ENCODE measurements at regions of chr2 and their contacts with region 1.

Region 1: DNA sequence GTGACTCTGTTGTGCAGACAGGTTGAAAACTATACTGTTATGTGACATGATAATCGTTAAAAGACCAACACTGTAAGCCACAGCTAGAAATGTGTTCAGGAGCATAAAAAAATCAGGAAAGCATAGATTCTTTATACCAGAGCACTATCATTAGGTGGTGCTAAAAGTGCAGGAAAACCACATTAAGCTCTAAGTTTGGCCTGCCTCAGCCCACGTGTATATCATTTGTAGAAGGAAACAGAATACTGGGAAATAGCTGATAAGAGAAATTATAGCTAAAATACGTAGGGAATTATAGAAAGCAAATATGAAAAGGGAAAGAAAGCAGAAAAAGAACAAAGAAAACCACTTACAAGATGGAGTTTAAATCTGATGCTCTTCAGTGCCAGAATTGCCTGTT is 26.5 kb upstream of the C2orf74 start:
- DNase-seq: peak; percentile 17
- H3K4me3 Mint-ChIP-seq: no peak overlapping the region
- H3K27ac Mint-ChIP-seq: no peak overlapping the region
- H3K4me1 Mint-ChIP-seq: peaks cover 2% of the 10 kb centered on the region
- H3K27me3 Mint-ChIP-seq: no peaks in the 10 kb centered on the region

Region 2: GRCh38 chr2:61065715-61066709 is 69.5 kb before region 1 on chr2 and contains the start of gene SANBR:
- CTCF ChIA-PET with region 1: no interaction called
- intact Hi-C with region 1: no loop called
- DNase-seq: peak; percentile 83
- H3K4me3 Mint-ChIP-seq: peak within 1 kb of the TSS; percentile 84
- H3K27ac Mint-ChIP-seq: no peak within 1 kb of the TSS
- H3K4me1 Mint-ChIP-seq: peaks cover 8% of the 10 kb centered on the region
- H3K27me3 Mint-ChIP-seq: no peaks in the 10 kb centered on the region
- total RNA-seq, gene SANBR: 1.9 to 2.1 TPM

Region 3: DNA sequence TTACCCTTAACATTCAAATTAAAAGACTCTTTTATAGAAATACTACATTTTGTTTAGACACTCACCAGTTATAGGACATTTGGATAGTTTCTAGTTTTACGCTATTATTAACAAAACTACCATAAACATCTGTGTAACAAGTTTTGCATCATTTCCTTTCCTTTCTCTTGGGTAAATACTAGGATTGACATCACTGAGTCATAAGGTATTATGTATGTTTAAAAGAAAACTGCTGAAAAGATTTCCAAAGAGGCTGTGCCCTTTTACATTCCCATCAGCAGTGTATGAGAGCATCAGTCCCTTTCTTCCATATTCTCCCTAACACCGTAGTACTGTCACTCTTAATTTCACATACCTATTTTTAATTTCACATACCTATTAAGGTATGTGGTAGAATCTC is 204.7 kb after region 1 on chr2:
- CTCF ChIA-PET with region 1: no interaction called
- intact Hi-C with region 1: no loop called
- DNase-seq: no peak
- H3K4me3 Mint-ChIP-seq: no peak overlapping the region
- H3K27ac Mint-ChIP-seq: peak overlapping the region; percentile 24
- H3K4me1 Mint-ChIP-seq: peaks cover 12% of the 10 kb centered on the region
- H3K27me3 Mint-ChIP-seq: no peaks in the 10 kb centered on the region

Region 4: DNA sequence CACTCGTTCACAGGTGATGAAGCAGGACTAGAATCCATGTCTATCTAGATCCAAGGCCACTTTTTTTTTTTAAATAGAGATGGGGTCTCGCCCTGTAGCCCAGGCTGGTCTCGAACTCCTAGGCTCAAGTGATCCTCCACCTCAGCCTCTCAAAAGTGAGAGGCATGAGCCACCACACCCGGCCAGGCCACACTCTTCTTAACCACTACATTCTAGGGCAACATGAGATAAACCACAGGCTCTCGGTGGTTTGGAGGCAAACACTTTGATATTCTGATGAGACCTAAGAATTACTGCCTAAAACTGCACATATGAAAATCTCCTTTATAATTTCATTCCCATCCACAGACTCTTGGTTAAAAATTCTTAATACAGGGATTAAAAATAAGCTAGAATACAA is 283.6 kb after region 1 on chr2:
- CTCF ChIA-PET with region 1: no interaction called
- intact Hi-C with region 1: loop called (anchors 1 kb)
- DNase-seq: no peak
- H3K4me3 Mint-ChIP-seq: no peak overlapping the region
- H3K27ac Mint-ChIP-seq: no peak overlapping the region
- H3K4me1 Mint-ChIP-seq: peaks cover 43% of the 10 kb centered on the region
- H3K27me3 Mint-ChIP-seq: no peaks in the 10 kb centered on the region

Region 5: DNA sequence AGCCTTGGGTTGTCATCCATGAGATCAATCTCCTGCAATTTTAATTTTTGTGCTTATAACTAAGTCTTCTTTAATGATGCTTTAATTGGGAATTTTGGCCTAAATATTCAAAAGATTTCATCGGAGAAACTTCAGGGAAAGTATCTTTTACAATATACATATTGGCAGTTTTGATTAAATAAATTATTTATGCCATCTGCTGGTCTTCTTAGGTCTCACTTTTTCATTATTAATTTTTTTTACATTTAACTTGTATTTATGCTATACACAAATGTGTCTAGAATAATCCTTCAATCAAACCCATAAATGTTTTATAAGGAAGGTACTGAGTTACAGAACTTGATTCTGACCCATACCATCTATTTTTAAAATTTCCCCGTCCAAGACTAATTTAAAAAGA is 497.7 kb after region 1 on chr2:
- CTCF ChIA-PET with region 1: no interaction called
- intact Hi-C with region 1: loop called (anchors 2 kb)
- DNase-seq: no peak
- H3K4me3 Mint-ChIP-seq: no peak overlapping the region
- H3K27ac Mint-ChIP-seq: no peak overlapping the region
- H3K4me1 Mint-ChIP-seq: no peaks in the 10 kb centered on the region
- H3K27me3 Mint-ChIP-seq: no peaks in the 10 kb centered on the region

Region 6: GRCh38 chr2:61658841-61659780 is 523.6 kb after region 1 on chr2:
- CTCF ChIA-PET with region 1: no interaction called
- intact Hi-C with region 1: loop called (anchors 1 kb)
- DNase-seq: no peak
- H3K4me3 Mint-ChIP-seq: no peak overlapping the region
- H3K27ac Mint-ChIP-seq: no peak overlapping the region
- H3K4me1 Mint-ChIP-seq: no peaks in the 10 kb centered on the region
- H3K27me3 Mint-ChIP-seq: no peaks in the 10 kb centered on the region

Region 7: DNA sequence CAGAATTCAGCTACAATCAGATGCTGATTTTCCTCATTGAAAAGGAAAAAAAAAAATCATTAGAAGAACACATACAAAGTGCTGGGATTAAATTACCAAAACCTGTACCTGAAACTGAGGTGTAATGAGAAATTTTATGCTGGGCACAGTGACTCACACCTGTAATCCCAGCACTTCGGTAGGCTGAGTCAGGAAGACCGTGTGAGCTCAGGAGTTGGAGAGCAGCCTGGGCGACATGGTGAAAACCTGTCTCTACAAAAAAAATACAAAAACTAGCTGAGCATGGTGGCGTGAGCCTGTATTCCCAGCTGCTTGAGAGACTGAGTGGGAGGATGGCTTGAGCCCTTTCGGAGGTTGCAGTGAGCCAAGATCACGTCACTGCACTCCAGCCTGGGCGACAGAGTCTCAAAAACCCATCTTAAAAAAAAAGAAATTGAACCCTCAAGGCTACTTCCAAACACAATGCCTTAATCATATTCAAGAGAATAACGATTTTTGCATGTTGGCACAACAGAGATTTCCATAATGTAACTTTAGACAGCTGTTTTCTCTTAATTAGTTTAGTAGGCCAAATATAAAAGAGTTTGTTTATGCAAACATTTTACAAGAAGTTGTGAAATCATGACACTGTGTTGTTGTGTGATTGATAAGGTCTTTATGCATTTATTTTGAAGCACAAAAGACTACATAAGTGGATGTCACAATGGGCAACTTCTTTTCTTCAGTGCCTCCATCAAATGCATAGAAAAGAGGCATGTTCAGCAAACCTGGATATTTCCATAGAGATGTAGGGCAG is 654.5 kb after region 1 on chr2:
- CTCF ChIA-PET with region 1: no interaction called
- intact Hi-C with region 1: loop called (anchors 1 kb)
- DNase-seq: no peak
- H3K4me3 Mint-ChIP-seq: no peak overlapping the region
- H3K27ac Mint-ChIP-seq: no peak overlapping the region
- H3K4me1 Mint-ChIP-seq: peaks cover 6% of the 10 kb centered on the region
- H3K27me3 Mint-ChIP-seq: peaks cover 2% of the 10 kb centered on the region

Region 8: DNA sequence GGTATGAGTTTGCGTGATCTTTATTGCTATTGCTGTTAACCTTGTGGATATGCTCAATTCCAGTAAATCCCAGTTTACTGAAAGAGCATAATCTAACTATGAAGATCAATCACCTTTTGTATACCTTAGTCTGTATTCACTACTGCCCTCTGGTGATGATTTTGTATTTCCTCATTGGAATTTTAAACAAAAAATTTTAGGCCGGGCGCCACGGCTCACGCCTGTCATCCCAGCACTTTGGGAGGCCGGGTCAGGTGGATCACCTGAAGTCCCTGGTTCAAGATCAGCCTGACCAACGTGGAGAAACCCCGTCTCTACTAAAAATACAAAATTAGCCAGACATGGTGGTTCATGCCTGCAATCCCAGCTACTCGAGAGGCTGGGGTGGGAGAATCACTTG is 775.1 kb after region 1 on chr2:
- CTCF ChIA-PET with region 1: no interaction called
- intact Hi-C with region 1: loop called (anchors 5 kb)
- DNase-seq: no peak
- H3K4me3 Mint-ChIP-seq: no peak overlapping the region
- H3K27ac Mint-ChIP-seq: no peak overlapping the region
- H3K4me1 Mint-ChIP-seq: peaks cover 25% of the 10 kb centered on the region
- H3K27me3 Mint-ChIP-seq: no peaks in the 10 kb centered on the region